ENCODE measurements at regions of chr4 and their contacts with region 1.

Region 1: GRCh38 chr4:184263910-184264732 is 46.4 kb upstream of the ENPP6 start:
- DNase-seq: peak; percentile 87 to 99 (median 94)
- ATAC-seq: peak; percentile 84
- H3K4me3 ChIP-seq: no peak overlapping the region
- H3K4me3 Mint-ChIP-seq: peak overlapping the region; percentile 30
- H3K27ac ChIP-seq: no peak overlapping the region
- H3K27ac Mint-ChIP-seq: no peak overlapping the region
- H3K4me1 ChIP-seq: peaks cover 27% of the 10 kb centered on the region
- H3K4me1 Mint-ChIP-seq: peaks cover 36% of the 10 kb centered on the region
- H3K27me3 ChIP-seq: no peaks in the 10 kb centered on the region
- H3K27me3 Mint-ChIP-seq: no peaks in the 10 kb centered on the region
- CTCF ChIP-seq: peak; percentile 85

Region 2: GRCh38 chr4:184287697-184288255 is 23.7 kb after region 1 on chr4:
- CTCF ChIA-PET with region 1: interaction called, 10 read pairs
- POLR2A ChIA-PET with region 1: interaction called, 4 read pairs
- intact Hi-C with region 1: no loop called
- DNase-seq: no peak
- ATAC-seq: no peak
- H3K4me3 ChIP-seq: no peak overlapping the region
- H3K4me3 Mint-ChIP-seq: peak overlapping the region; percentile 4
- H3K27ac ChIP-seq: no peak overlapping the region
- H3K27ac Mint-ChIP-seq: no peak overlapping the region
- H3K4me1 ChIP-seq: peaks cover 30% of the 10 kb centered on the region
- H3K4me1 Mint-ChIP-seq: peaks cover 32% of the 10 kb centered on the region
- H3K27me3 ChIP-seq: no peaks in the 10 kb centered on the region
- H3K27me3 Mint-ChIP-seq: no peaks in the 10 kb centered on the region
- CTCF ChIP-seq: no peak

Region 3: GRCh38 chr4:184417802-184418511 is 153.8 kb after region 1 on chr4:
- CTCF ChIA-PET with region 1: interaction called, 11 read pairs
- POLR2A ChIA-PET with region 1: interaction called, 6 read pairs
- intact Hi-C with region 1: loop called in 1 of 2 experiments (anchors 10 kb)
- DNase-seq: peak in 4 of 14 experiments; percentile 28 to 74 (median 64)
- ATAC-seq: peak; percentile 58
- H3K4me3 ChIP-seq: peak overlapping the region; percentile 53
- H3K4me3 Mint-ChIP-seq: peak overlapping the region; percentile 79
- H3K27ac ChIP-seq: peak overlapping the region; percentile 66 to 78
- H3K27ac Mint-ChIP-seq: peak overlapping the region; percentile 92
- H3K4me1 ChIP-seq: peaks cover 72% of the 10 kb centered on the region
- H3K4me1 Mint-ChIP-seq: peaks cover 75% of the 10 kb centered on the region
- H3K27me3 ChIP-seq: no peaks in the 10 kb centered on the region
- H3K27me3 Mint-ChIP-seq: no peaks in the 10 kb centered on the region
- CTCF ChIP-seq: no peak

Region 4: DNA sequence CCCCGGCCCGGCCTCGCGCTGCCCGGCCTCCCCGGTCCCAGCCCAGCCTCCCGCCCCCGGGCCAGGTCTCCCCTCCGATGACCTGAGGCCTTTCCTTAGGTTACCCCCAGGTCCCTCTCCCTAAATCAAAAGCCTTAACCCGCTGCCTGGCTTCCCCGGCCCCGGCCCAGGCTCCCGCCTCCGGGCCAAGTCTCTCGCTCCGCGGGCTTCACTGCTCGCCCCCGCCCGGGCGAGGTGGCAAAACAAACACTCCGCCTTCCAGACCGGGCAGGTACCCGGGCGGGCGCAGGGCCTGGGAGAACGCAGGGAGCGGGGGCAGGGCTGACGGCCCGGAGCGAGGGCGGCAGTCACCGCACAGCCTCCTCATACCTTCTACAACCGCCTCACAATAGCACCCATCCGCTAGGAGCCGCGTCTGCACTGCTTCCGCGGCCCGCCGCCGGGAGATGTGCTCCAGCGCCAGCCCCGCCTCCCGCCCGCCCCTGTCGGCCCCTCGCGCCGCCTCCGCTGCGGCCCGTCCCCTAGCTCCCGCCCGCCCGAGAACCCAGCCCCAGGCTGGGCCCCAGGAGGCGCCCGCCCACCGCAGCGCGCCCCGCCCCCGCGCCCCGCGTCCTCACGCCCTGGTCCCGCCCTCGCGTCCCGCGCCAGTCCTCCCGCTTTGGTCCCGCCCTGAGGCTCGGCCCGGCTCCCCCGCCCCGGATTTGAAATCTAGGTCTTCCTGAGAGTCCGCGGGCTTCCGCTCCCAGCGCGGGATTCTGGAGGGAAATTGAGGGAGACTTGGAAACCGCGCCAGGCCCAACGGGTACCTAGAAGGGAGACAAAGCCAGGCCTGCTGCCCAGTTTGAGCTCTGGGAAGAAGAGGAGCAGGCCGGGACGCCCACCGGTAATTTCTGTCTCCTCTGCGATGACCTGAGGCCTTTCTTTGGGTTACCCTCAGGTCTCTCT is 385.2 kb after region 1 on chr4 and contains the starts of genes CASP3 and PRIMPOL:
- CTCF ChIA-PET with region 1: interaction called, 3 read pairs
- POLR2A ChIA-PET with region 1: interaction called, 24 read pairs
- intact Hi-C with region 1: loop called (anchors 1 to 5 kb)
- DNase-seq: peak; percentile 90 to 99 (median 96)
- ATAC-seq: peak; percentile 85
- H3K4me3 ChIP-seq: peak within 1 kb of the TSS; percentile 93
- H3K4me3 Mint-ChIP-seq: peak within 1 kb of the TSS; percentile 96
- H3K27ac ChIP-seq: peak within 1 kb of the TSS; percentile 72 to 77
- H3K27ac Mint-ChIP-seq: peak within 1 kb of the TSS; percentile 96
- H3K4me1 ChIP-seq: peaks cover 37% of the 10 kb centered on the region
- H3K4me1 Mint-ChIP-seq: peaks cover 51% of the 10 kb centered on the region
- H3K27me3 ChIP-seq: no peaks in the 10 kb centered on the region
- H3K27me3 Mint-ChIP-seq: no peaks in the 10 kb centered on the region
- CTCF ChIP-seq: peak; percentile 24
- total RNA-seq, gene CASP3: 11.9 to 12.2 TPM
- total RNA-seq, gene PRIMPOL: 4.2 TPM

Region 5: GRCh38 chr4:184899261-184900134 is 635.4 kb after region 1 on chr4:
- CTCF ChIA-PET with region 1: no interaction called
- POLR2A ChIA-PET with region 1: no interaction called
- intact Hi-C with region 1: loop called in 1 of 2 experiments (anchors 10 kb)
- DNase-seq: no peak
- ATAC-seq: no peak
- H3K4me3 ChIP-seq: no peak overlapping the region
- H3K4me3 Mint-ChIP-seq: no peak overlapping the region
- H3K27ac ChIP-seq: no peak overlapping the region
- H3K27ac Mint-ChIP-seq: no peak overlapping the region
- H3K4me1 ChIP-seq: peaks cover 3% of the 10 kb centered on the region
- H3K4me1 Mint-ChIP-seq: no peaks in the 10 kb centered on the region
- H3K27me3 ChIP-seq: peaks cover 7 to 8% of the 10 kb centered on the region in 2 experiments
- H3K27me3 Mint-ChIP-seq: peaks cover 11% of the 10 kb centered on the region
- CTCF ChIP-seq: no peak

Region 6: DNA sequence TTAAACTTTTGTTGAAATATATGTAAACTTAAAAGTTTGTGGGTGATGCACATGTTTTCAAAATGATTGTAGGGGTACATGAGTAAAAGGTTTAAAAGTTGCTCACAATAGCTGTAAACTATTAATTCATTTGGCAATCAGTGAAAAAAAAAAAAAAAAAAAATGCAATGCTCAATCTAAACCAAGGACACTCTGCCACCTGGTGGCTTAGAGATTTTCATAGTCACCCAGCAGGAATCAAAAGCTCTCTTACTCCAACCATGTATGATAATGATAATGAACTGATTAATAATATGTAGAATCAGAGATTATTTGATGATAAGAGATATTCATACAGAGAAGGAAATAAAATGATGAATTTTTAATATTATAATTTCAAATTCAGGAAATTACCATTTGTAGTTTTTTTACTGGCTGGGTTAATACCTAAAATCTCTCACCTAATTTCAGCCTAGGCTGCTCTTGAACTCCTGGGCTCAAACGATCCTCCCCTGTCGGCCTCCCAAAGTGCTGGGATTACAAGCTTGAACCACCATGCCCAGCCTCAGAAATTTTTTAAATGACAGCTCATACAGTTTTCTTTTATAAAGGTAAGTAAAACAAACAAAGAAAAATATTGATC is 832.0 kb after region 1 on chr4:
- CTCF ChIA-PET with region 1: interaction called, 10 read pairs
- POLR2A ChIA-PET with region 1: interaction called, 3 read pairs
- intact Hi-C with region 1: loop called (anchors 1 to 5 kb)
- DNase-seq: peak in 5 of 14 experiments; percentile 4 to 49 (median 36)
- ATAC-seq: no peak
- H3K4me3 ChIP-seq: no peak overlapping the region
- H3K4me3 Mint-ChIP-seq: no peak overlapping the region
- H3K27ac ChIP-seq: no peak overlapping the region
- H3K27ac Mint-ChIP-seq: no peak overlapping the region
- H3K4me1 ChIP-seq: no peaks in the 10 kb centered on the region
- H3K4me1 Mint-ChIP-seq: no peaks in the 10 kb centered on the region
- H3K27me3 ChIP-seq: peaks cover 11 to 15% of the 10 kb centered on the region in 2 experiments
- H3K27me3 Mint-ChIP-seq: peaks cover 47% of the 10 kb centered on the region
- CTCF ChIP-seq: peak; percentile 57

Region 7: GRCh38 chr4:185203486-185204237 is 939.5 kb after region 1 on chr4 and contains the start of gene CFAP97:
- CTCF ChIA-PET with region 1: no interaction called
- POLR2A ChIA-PET with region 1: no interaction called
- intact Hi-C with region 1: loop called in 1 of 2 experiments (anchors 10 kb)
- DNase-seq: peak; percentile 59 to 96 (median 76)
- ATAC-seq: peak; percentile 79
- H3K4me3 ChIP-seq: peak within 1 kb of the TSS; percentile 76
- H3K4me3 Mint-ChIP-seq: peak within 1 kb of the TSS; percentile 98
- H3K27ac ChIP-seq: peak within 1 kb of the TSS; percentile 89 to 90
- H3K27ac Mint-ChIP-seq: peak within 1 kb of the TSS; percentile 89
- H3K4me1 ChIP-seq: peaks cover 42% of the 10 kb centered on the region
- H3K4me1 Mint-ChIP-seq: peaks cover 60% of the 10 kb centered on the region
- H3K27me3 ChIP-seq: no peaks in the 10 kb centered on the region
- H3K27me3 Mint-ChIP-seq: no peaks in the 10 kb centered on the region
- CTCF ChIP-seq: no peak
- total RNA-seq, gene CFAP97: 24.5 to 26.6 TPM

Measured in CD4-positive, alpha-beta T cell (primary cell).